ENCODE measurements at regions of chr5 and their contacts with region 1.

Region 1: GRCh38 chr5:18699681-18700080 is 1065.4 kb downstream of the TAF11L14 start:
- DNase-seq: no peak
- H3K4me3 ChIP-seq: no peak overlapping the region
- H3K4me3 Mint-ChIP-seq: no peak overlapping the region
- H3K27ac ChIP-seq: no peak overlapping the region
- H3K27ac Mint-ChIP-seq: no peak overlapping the region
- H3K4me1 ChIP-seq: peaks cover 8% of the 10 kb centered on the region in 2 donors
- H3K4me1 Mint-ChIP-seq: peaks cover 21% of the 10 kb centered on the region
- H3K27me3 ChIP-seq: no peaks in the 10 kb centered on the region
- H3K27me3 Mint-ChIP-seq: no peaks in the 10 kb centered on the region
- CTCF ChIP-seq: no peak

Region 2: GRCh38 chr5:18393589-18394442 is 305.9 kb before region 1 on chr5:
- intact Hi-C with region 1: loop called in 1 of 2 experiments (anchors 10 kb)
- DNase-seq: peak in 2 of 3 donors; percentile 6 to 27
- H3K4me3 ChIP-seq: no peak overlapping the region
- H3K4me3 Mint-ChIP-seq: no peak overlapping the region
- H3K27ac ChIP-seq: no peak overlapping the region
- H3K27ac Mint-ChIP-seq: no peak overlapping the region
- H3K4me1 ChIP-seq: no peaks in the 10 kb centered on the region
- H3K4me1 Mint-ChIP-seq: peaks cover 1% of the 10 kb centered on the region
- H3K27me3 ChIP-seq: no peaks in the 10 kb centered on the region
- H3K27me3 Mint-ChIP-seq: no peaks in the 10 kb centered on the region
- CTCF ChIP-seq: peak; percentile 78

Region 3: GRCh38 chr5:18465833-18466591 is 233.7 kb before region 1 on chr5:
- intact Hi-C with region 1: loop called in 1 of 2 experiments (anchors 10 kb)
- DNase-seq: peak; percentile 2 to 11 (median 5)
- H3K4me3 ChIP-seq: no peak overlapping the region
- H3K4me3 Mint-ChIP-seq: no peak overlapping the region
- H3K27ac ChIP-seq: no peak overlapping the region
- H3K27ac Mint-ChIP-seq: no peak overlapping the region
- H3K4me1 ChIP-seq: no peaks in the 10 kb centered on the region
- H3K4me1 Mint-ChIP-seq: no peaks in the 10 kb centered on the region
- H3K27me3 ChIP-seq: no peaks in the 10 kb centered on the region
- H3K27me3 Mint-ChIP-seq: peaks cover 0 to 2% (median 0%) of the 10 kb centered on the region in 3 donors
- CTCF ChIP-seq: peak; percentile 67

Region 4: GRCh38 chr5:18653216-18653752 is 46.4 kb before region 1 on chr5:
- intact Hi-C with region 1: no loop called
- DNase-seq: no peak
- H3K4me3 ChIP-seq: no peak overlapping the region
- H3K4me3 Mint-ChIP-seq: no peak overlapping the region
- H3K27ac ChIP-seq: no peak overlapping the region
- H3K27ac Mint-ChIP-seq: no peak overlapping the region
- H3K4me1 ChIP-seq: no peaks in the 10 kb centered on the region
- H3K4me1 Mint-ChIP-seq: no peaks in the 10 kb centered on the region
- H3K27me3 ChIP-seq: no peaks in the 10 kb centered on the region
- H3K27me3 Mint-ChIP-seq: peaks cover 0 to 2% (median 2%) of the 10 kb centered on the region in 3 donors
- CTCF ChIP-seq: no peak

Region 5: DNA sequence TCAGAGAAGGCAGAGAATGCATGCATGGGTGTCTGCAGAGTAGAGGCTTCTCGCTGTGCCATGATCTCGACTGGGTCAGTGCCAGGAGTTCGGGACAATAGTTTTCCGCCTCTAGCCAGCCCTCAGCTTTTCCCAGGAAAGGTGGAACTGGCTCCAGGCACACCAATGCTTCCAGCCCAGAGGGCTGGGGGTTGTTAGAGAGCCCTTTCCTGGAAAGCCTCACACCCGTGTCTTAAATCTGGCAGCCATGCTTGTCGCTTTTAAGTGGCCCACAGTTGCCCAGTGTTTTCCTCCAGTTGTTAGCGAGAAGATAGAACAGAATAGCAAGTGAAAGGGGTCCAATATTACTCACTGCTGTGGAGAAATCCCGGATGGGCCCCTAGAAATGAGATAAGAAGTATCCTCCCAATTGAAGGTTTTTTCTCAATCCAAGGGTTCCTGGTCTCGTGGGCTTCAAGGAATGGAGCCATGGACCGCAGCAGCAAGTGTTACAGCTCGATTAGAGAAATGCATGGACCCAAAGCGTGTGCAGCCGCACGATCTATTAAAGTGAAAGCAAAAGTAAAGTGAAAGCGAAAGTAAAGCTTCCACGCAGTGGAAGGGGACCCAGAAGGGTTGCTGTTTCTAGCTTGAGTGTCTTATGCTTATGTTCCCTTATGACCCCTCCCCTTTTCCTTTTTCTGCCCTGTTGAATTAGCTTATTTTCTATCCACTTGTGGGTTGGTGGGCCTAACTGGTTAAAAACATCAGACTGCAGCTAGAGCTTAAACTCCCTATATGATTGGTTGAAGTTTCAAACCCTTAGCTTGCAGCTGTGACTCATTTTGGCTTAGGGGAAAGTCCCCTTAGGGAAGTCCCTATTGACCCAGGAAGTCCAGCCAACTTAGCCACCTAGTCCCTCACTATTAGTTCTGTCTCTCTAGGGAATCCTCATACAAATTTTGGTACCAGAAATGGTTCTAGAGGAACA is 46.2 kb after region 1 on chr5:
- intact Hi-C with region 1: loop called in 1 of 2 experiments (anchors 10 kb)
- DNase-seq: peak; percentile 69 to 82 (median 77)
- H3K4me3 ChIP-seq: peak overlapping the region; percentile 71 to 99 (median 91)
- H3K4me3 Mint-ChIP-seq: peak overlapping the region; percentile 90 to 96
- H3K27ac ChIP-seq: peak overlapping the region; percentile 80 to 97
- H3K27ac Mint-ChIP-seq: peak overlapping the region; percentile 95 to 98 (median 97)
- H3K4me1 ChIP-seq: peaks cover 15 to 18% of the 10 kb centered on the region in 2 donors
- H3K4me1 Mint-ChIP-seq: peaks cover 21% of the 10 kb centered on the region
- H3K27me3 ChIP-seq: no peaks in the 10 kb centered on the region
- H3K27me3 Mint-ChIP-seq: no peaks in the 10 kb centered on the region
- CTCF ChIP-seq: no peak

Region 6: DNA sequence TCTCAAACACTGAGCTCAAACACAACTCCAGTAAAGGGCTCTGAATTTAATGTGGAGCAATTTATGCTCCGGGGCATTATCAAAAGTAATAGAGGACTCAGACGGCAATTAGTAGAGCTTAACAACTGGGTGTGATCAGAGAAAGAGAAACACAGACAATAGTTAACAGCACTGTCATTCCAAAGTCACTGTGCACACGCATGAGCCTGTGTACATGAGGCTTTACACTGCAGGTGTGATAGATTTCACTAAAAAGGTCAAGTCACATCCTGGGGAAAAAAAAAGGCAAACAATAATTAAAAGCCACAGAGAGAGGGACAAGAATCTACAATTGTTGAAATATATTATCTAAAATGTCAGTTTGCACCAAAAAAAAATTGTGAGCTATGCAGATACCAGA is 331.8 kb after region 1 on chr5:
- intact Hi-C with region 1: no loop called
- DNase-seq: no peak
- H3K4me3 ChIP-seq: no peak overlapping the region
- H3K4me3 Mint-ChIP-seq: no peak overlapping the region
- H3K27ac ChIP-seq: no peak overlapping the region
- H3K27ac Mint-ChIP-seq: no peak overlapping the region
- H3K4me1 ChIP-seq: no peaks in the 10 kb centered on the region
- H3K4me1 Mint-ChIP-seq: no peaks in the 10 kb centered on the region
- H3K27me3 ChIP-seq: no peaks in the 10 kb centered on the region
- H3K27me3 Mint-ChIP-seq: no peaks in the 10 kb centered on the region
- CTCF ChIP-seq: no peak

Measured in CD14-positive monocyte (primary cell).